Dendritic cell treated with granulocyte-macrophage colony-stimulating factor and Interleukin-4, amounts not matched to agents 40 ng/mL and 50 ng/mL, for 4 days (primary cell): ENCODE measurements at regions of chr12 and their contacts with region 1.

Region 1: DNA sequence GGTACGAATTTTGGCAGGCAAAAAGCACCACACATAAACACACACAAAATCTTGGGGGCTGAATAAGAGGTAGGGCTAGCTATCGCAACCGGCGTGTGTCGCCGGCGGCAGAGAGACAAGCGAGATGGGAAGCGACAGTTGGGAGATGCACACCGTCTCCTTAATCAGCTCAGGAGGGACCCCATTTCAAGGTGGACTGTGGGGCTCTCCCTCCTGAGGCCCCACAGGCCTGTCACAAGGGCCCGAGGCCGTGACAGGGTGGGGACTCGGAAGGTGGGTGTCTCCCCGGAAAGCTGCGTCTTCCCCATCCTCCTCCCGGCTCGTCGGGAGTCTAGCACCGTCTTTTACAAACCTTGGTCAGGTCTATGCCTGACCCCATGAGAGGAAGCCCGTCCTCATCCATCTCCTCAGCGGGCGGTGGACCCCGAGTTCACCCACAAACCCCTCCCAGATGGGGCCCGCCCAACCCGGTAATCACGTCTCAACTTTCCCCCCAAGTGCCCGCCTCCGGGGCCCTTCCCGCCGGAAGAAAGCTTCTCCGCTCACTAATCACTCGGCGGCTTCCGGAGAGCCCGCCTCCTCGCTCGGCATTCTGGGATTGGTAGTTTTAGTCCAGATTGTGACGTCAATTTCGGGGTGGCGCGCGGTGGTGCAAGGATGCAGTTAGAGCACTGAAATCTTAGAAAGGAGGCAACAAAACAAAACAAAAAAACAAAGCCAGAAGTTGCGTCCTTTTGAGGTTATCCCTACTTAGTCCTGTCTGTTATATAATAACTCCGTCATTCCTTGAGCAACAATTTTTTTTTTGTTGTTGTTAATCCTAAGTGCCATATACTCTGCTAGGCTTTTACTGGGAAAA is at the start of gene WASHC3:
- H3K4me3 Mint-ChIP-seq: peak within 1 kb of the TSS; percentile 89
- H3K27ac Mint-ChIP-seq: peak within 1 kb of the TSS; percentile 92
- H3K4me1 Mint-ChIP-seq: peaks cover 10% of the 10 kb centered on the region
- H3K27me3 Mint-ChIP-seq: no peaks in the 10 kb centered on the region

Region 2: DNA sequence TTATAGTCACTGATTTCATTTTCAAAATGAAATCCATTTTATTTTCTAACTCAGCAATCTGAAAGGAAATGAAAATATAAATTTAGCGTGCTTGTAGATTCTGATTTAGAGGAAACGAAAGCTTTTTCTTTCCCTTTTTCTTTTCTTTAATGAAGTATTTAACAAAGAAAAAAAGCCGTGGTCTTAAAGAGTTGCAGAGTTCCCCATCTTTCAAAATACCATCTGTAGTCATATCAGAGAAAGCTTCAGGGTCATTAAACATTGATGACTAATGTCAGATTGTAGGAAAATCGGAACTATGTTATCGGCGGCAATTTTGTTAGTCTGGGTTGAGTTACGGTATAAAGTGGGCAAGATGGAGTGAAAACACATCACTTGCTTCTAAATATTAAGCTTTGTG is 152.1 kb before region 1 on chr12:
- intact Hi-C with region 1: loop called (anchors 10 kb)
- H3K4me3 Mint-ChIP-seq: peak overlapping the region; percentile 54
- H3K27ac Mint-ChIP-seq: peak overlapping the region; percentile 68
- H3K4me1 Mint-ChIP-seq: peaks cover 44% of the 10 kb centered on the region
- H3K27me3 Mint-ChIP-seq: no peaks in the 10 kb centered on the region

Region 3: DNA sequence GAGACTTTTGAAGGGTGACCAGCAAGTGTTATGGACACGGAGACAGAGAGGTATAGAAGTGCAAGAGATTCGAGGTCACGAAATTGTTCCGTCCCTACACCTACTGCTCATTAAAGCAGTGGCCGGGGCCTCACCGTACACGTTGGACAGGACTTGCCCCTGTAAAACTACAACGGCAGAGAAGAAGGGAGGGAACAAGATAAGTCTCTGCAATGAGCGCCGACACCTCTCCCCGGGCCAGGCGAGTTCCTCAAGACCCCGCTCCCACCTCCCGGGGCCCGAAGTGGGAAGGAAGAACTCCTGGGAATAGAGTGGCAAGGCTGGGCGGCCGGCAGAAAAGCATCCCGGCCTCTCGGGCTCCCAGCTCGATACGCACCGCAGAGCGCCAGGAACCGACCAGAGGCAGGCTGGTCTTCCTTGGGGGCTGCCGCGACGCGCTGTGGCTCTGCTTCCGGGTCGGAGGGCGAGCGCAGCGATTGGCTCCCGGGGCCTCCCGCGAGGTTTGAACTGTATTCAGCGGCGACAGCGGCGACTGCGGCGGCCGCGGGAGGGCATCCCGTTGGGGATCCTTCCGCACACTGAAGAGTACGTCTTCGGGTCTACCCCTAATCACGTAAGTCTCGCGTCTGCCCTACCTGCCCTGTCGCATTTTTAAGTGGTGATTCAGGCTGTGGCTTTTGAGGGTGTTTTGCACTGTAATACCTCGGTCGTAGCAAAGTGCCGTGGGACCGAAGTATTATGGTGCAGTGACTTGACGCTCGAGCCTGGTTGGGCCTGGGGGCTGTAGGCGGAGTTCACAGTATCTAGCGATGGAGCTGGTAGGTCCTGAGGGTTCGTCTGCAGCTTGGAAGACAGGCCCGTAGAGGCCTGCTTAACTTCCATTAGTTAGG is 58.1 kb after region 1 on chr12 and contains the starts of genes NUP37 and PARPBP:
- intact Hi-C with region 1: loop called (anchors 1 kb)
- H3K4me3 Mint-ChIP-seq: peak within 1 kb of the TSS; percentile 90
- H3K27ac Mint-ChIP-seq: peak within 1 kb of the TSS; percentile 91
- H3K4me1 Mint-ChIP-seq: peaks cover 21% of the 10 kb centered on the region
- H3K27me3 Mint-ChIP-seq: no peaks in the 10 kb centered on the region